ENCODE measurements at regions of chr6 and their contacts with region 1.

Region 1: DNA sequence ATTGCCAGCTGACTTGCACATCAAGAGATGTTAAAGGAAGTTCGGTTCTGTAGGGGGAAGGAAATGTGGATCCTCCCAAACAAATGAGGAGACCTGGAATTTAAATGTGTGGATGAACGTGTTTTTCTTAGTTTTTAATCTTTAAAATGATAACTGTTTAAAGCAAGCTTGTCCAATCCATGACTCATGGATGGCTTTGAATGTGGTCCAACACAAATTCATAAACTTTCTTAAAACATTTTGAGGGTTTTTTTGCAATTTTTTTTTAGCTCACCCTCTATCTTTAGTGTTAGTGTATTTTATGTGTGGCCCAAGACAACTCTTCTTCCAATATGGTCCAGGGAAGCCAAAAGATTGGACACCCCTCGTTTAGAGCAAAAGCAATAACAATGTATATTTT is 12.6 kb downstream of the TUBB2B start:
- DNase-seq: no peak
- H3K4me3 ChIP-seq: no peak overlapping the region
- H3K27me3 ChIP-seq: peaks cover 7% of the 10 kb centered on the region
- CTCF ChIP-seq: no peak

Region 2: GRCh38 chr6:3913077-3913957 is 698.4 kb after region 1 on chr6:
- CTCF ChIA-PET with region 1: no interaction called
- POLR2A ChIA-PET with region 1: interaction called, 12 read pairs
- DNase-seq: peak; percentile 98
- H3K4me3 ChIP-seq: no peak overlapping the region
- H3K27me3 ChIP-seq: no peaks in the 10 kb centered on the region
- CTCF ChIP-seq: no peak